Caco-2 (cell line): ENCODE measurements at regions of chr3 and their contacts with region 1.

Region 1: GRCh38 chr3:4722103-4722502 is 229.0 kb downstream of the ITPR1 start:
- DNase-seq: peak in 1 of 2 experiments; percentile 42
- H3K4me3 ChIP-seq: no peak overlapping the region
- H3K4me3 Mint-ChIP-seq: no peak overlapping the region
- H3K27ac Mint-ChIP-seq: no peak overlapping the region
- H3K4me1 ChIP-seq: no peaks in the 10 kb centered on the region
- H3K4me1 Mint-ChIP-seq: peaks cover 6% of the 10 kb centered on the region
- H3K27me3 ChIP-seq: no peaks in the 10 kb centered on the region
- H3K27me3 Mint-ChIP-seq: no peaks in the 10 kb centered on the region
- CTCF ChIP-seq: peak in 1 of 2 experiments; percentile 20

Region 2: DNA sequence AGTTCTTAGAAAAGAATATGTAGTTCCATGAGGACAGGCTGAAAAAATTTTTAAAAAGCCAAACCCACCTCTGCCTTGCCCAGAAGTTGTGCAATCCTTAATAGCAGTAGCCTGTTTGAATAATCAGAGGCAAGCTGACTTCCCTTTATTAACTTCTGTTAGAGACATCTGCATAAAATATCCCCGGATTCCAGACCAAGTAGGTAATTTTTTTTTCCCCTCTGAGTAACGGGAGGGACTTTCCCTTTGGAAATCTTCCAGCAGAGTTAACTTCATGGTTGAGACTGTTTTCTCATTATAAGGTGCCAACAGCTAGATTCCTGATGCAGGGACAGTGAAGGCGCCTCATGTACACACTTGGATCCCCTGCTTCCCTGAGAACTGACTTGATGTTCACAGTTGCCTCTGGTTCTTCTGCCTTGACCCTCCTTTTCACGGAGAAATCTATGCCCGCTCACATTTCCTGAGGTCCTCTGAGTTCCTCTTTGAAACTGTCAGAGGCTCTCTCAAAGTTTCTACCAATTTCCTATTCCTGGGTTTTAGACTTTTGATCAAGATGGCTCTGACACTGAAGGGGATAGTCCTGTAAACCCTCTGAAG is 29.5 kb after region 1 on chr3:
- CTCF ChIA-PET with region 1: interaction called, 5 read pairs
- POLR2A ChIA-PET with region 1: no interaction called
- intact Hi-C with region 1: loop called (anchors 1 kb)
- DNase-seq: no peak
- H3K4me3 ChIP-seq: no peak overlapping the region
- H3K4me3 Mint-ChIP-seq: peak overlapping the region; percentile 18
- H3K27ac Mint-ChIP-seq: peak overlapping the region; percentile 83
- H3K4me1 ChIP-seq: peaks cover 45% of the 10 kb centered on the region
- H3K4me1 Mint-ChIP-seq: peaks cover 24% of the 10 kb centered on the region
- H3K27me3 ChIP-seq: no peaks in the 10 kb centered on the region
- H3K27me3 Mint-ChIP-seq: no peaks in the 10 kb centered on the region
- CTCF ChIP-seq: no peak

Region 3: DNA sequence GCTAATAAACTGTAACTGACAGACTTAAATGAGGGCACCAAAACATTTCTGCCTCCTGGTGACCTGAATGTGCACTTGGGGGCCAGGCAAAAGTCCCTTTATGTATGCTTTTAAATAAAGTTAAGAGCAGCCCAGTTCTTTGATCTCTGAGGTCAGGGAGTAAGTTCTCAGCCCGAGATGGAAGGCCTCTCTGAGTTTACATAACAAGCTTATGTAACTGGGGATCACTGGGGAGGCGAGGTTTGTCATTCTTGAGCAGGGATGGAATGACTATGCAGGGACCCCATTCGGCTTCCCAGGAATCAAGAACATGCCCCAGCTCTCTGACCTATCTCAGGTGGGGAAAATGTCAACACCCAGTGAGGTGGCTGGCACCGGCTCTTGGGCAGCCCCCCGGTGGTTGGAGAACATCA is 58.4 kb after region 1 on chr3:
- CTCF ChIA-PET with region 1: interaction called, 10 read pairs
- POLR2A ChIA-PET with region 1: no interaction called
- intact Hi-C with region 1: loop called (anchors 2 kb)
- DNase-seq: peak in 1 of 2 experiments; percentile 20
- H3K4me3 ChIP-seq: no peak overlapping the region
- H3K4me3 Mint-ChIP-seq: no peak overlapping the region
- H3K27ac Mint-ChIP-seq: no peak overlapping the region
- H3K4me1 ChIP-seq: peaks cover 9% of the 10 kb centered on the region; the same call in 1 of the 2 replicates
- H3K4me1 Mint-ChIP-seq: peaks cover 7% of the 10 kb centered on the region
- H3K27me3 ChIP-seq: no peaks in the 10 kb centered on the region
- H3K27me3 Mint-ChIP-seq: no peaks in the 10 kb centered on the region
- CTCF ChIP-seq: no peak

Region 4: DNA sequence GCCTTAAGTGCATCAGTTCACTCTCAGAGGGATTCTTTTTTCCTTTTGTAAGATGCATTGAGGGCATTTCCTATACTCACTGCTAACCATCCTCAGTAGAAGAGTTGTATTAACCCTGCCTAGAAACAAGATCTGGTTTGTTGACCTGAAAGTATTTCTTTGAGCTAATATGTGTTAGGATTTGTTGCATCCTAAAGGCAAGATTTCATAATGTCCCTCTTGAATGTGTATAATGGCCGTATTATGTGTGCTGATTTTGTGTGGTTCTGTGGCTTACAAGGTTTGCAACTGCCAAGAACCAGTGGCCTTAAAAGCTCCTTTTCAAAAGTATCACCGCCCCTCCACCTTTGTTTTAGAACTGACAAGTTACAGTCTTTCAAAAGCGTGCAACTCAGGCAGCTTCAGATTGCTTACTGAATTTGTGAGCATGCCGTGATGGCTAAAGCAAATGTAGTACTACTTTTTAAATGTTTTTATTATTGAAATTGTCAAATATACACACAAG is 75.2 kb after region 1 on chr3:
- CTCF ChIA-PET with region 1: no interaction called
- POLR2A ChIA-PET with region 1: no interaction called
- intact Hi-C with region 1: no loop called
- DNase-seq: no peak
- H3K4me3 ChIP-seq: no peak overlapping the region
- H3K4me3 Mint-ChIP-seq: no peak overlapping the region
- H3K27ac Mint-ChIP-seq: no peak overlapping the region
- H3K4me1 ChIP-seq: no peaks in the 10 kb centered on the region
- H3K4me1 Mint-ChIP-seq: no peaks in the 10 kb centered on the region
- H3K27me3 ChIP-seq: no peaks in the 10 kb centered on the region
- H3K27me3 Mint-ChIP-seq: no peaks in the 10 kb centered on the region
- CTCF ChIP-seq: no peak

Region 5: GRCh38 chr3:5006755-5007202 is 284.7 kb after region 1 on chr3:
- CTCF ChIA-PET with region 1: no interaction called
- POLR2A ChIA-PET with region 1: no interaction called
- intact Hi-C with region 1: no loop called
- DNase-seq: no peak
- H3K4me3 ChIP-seq: no peak overlapping the region
- H3K4me3 Mint-ChIP-seq: no peak overlapping the region
- H3K27ac Mint-ChIP-seq: no peak overlapping the region
- H3K4me1 ChIP-seq: peaks cover 4% of the 10 kb centered on the region
- H3K4me1 Mint-ChIP-seq: peaks cover 7% of the 10 kb centered on the region
- H3K27me3 ChIP-seq: no peaks in the 10 kb centered on the region
- H3K27me3 Mint-ChIP-seq: no peaks in the 10 kb centered on the region
- CTCF ChIP-seq: no peak

Region 6: GRCh38 chr3:5026331-5027218 is 304.5 kb after region 1 on chr3:
- CTCF ChIA-PET with region 1: interaction called, 8 read pairs
- POLR2A ChIA-PET with region 1: no interaction called
- intact Hi-C with region 1: loop called (anchors 1 kb)
- DNase-seq: peak; percentile 85 to 87
- H3K4me3 ChIP-seq: peak overlapping the region; percentile 48
- H3K4me3 Mint-ChIP-seq: peak overlapping the region; percentile 88
- H3K27ac Mint-ChIP-seq: peak overlapping the region; percentile 93
- H3K4me1 ChIP-seq: peaks cover 27% of the 10 kb centered on the region
- H3K4me1 Mint-ChIP-seq: peaks cover 30% of the 10 kb centered on the region
- H3K27me3 ChIP-seq: no peaks in the 10 kb centered on the region
- H3K27me3 Mint-ChIP-seq: no peaks in the 10 kb centered on the region
- CTCF ChIP-seq: peak; percentile 32 to 58

Region 7: DNA sequence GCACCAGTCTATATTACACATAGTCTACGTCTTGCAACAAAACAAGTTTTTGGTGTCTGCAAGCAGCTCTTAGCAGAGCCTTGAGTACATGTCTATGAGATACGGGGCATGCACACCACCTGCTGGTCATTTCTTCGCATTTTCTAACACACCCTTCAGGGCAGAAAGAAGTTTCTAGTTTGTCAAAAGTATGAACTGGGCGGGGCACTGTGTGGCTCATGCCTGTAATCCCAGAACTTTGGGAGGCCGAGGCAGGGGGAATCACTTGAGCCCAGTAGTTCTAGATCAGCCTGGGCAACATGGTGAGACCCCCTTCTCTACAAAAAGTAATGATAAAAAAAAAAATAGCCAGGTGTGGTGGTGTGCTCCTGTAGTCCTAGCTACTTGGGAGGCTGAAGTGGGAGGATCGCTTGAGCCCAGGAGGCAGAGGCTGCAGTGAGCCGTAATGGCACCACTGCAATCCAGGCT is 335.8 kb after region 1 on chr3:
- CTCF ChIA-PET with region 1: interaction called, 7 read pairs
- POLR2A ChIA-PET with region 1: no interaction called
- intact Hi-C with region 1: loop called (anchors 1 kb)
- DNase-seq: peak; percentile 75 to 76
- H3K4me3 ChIP-seq: no peak overlapping the region
- H3K4me3 Mint-ChIP-seq: no peak overlapping the region
- H3K27ac Mint-ChIP-seq: no peak overlapping the region
- H3K4me1 ChIP-seq: no peaks in the 10 kb centered on the region
- H3K4me1 Mint-ChIP-seq: no peaks in the 10 kb centered on the region
- H3K27me3 ChIP-seq: no peaks in the 10 kb centered on the region
- H3K27me3 Mint-ChIP-seq: no peaks in the 10 kb centered on the region
- CTCF ChIP-seq: peak; percentile 68 to 69